ENCODE measurements at regions of chr18 and their contacts with region 1.

Region 1: GRCh38 chr18:8833480-8833879 is 128.1 kb downstream of the MTCL1 start:
- DNase-seq: no peak
- ATAC-seq: no peak
- H3K4me3 ChIP-seq: no peak overlapping the region
- H3K27ac ChIP-seq: no peak overlapping the region
- H3K4me1 ChIP-seq: peaks cover 10 to 16% of the 10 kb centered on the region in 2 donors
- H3K27me3 ChIP-seq: no peaks in the 10 kb centered on the region
- CTCF ChIP-seq: no peak
- POLR2A ChIP-seq: no peak

Region 2: DNA sequence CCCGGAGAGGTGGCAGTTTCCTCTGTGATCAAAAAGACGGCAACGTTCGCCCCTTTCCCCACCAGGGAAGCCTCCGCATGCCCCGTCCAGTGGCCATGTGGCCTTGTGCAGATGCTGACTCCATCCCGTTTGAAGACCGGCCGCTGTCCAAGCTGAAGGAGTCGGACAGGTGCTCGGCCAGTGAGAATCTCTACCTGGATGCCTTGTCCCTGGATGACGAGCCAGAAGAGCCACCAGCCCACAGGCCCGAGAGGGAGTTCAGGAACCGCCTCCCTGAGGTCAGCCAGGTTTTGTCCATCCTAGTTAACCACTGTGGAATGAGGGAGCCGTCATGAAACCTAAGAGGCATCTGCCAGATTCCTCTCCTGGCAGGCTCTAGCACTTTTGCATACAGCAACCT is 14.5 kb before region 1 on chr18:
- in situ Hi-C with region 1: no loop called
- intact Hi-C with region 1: loop called (anchors 2 kb)
- DNase-seq: no peak
- ATAC-seq: no peak
- H3K4me3 ChIP-seq: no peak overlapping the region
- H3K27ac ChIP-seq: no peak overlapping the region
- H3K4me1 ChIP-seq: peaks cover 5 to 13% of the 10 kb centered on the region in 2 donors
- H3K27me3 ChIP-seq: no peaks in the 10 kb centered on the region
- CTCF ChIP-seq: no peak
- POLR2A ChIP-seq: no peak

Measured in gastrocnemius medialis (tissue), 4 donors.